MCF 10A (cell line): ENCODE measurements at regions of chr9 and their contacts with region 1.

Region 1: DNA sequence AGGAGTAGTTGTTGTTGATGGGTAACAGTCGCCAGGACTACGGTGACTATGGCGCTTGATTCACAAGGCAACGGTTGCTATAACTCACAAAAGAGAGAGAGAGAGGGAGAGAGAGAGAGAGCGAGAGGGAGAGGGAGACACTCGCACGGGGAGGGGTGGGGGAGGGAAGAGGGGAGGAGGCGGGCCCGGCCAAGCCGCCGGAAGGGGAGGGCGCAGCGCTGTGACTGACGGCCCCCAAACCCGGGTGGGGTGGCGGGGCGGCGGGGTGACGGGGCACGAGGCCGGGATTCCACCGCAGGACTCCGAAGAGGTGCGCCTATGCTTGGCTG is at the start of gene RFX3:
- DNase-seq: peak; percentile 96
- H3K4me3 Mint-ChIP-seq: peak within 1 kb of the TSS; percentile 94
- H3K27ac Mint-ChIP-seq: peak within 1 kb of the TSS; percentile 100
- H3K4me1 Mint-ChIP-seq: peaks cover 33% of the 10 kb centered on the region
- H3K27me3 Mint-ChIP-seq: no peaks in the 10 kb centered on the region
- CTCF ChIP-seq: no peak
- total RNA-seq, gene RFX3: 9.2 and 9.7 TPM in 2 replicates

Region 2: GRCh38 chr9:2837915-2838314 is 687.9 kb before region 1 on chr9:
- CTCF ChIA-PET with region 1: interaction called, 3 read pairs
- POLR2A ChIA-PET with region 1: interaction called, 22 read pairs
- intact Hi-C with region 1: no loop called
- DNase-seq: no peak
- H3K4me3 Mint-ChIP-seq: peak overlapping the region; percentile 63
- H3K27ac Mint-ChIP-seq: peak overlapping the region; percentile 84
- H3K4me1 Mint-ChIP-seq: peaks cover 24% of the 10 kb centered on the region
- H3K27me3 Mint-ChIP-seq: no peaks in the 10 kb centered on the region
- CTCF ChIP-seq: peak; percentile 35

Region 3: DNA sequence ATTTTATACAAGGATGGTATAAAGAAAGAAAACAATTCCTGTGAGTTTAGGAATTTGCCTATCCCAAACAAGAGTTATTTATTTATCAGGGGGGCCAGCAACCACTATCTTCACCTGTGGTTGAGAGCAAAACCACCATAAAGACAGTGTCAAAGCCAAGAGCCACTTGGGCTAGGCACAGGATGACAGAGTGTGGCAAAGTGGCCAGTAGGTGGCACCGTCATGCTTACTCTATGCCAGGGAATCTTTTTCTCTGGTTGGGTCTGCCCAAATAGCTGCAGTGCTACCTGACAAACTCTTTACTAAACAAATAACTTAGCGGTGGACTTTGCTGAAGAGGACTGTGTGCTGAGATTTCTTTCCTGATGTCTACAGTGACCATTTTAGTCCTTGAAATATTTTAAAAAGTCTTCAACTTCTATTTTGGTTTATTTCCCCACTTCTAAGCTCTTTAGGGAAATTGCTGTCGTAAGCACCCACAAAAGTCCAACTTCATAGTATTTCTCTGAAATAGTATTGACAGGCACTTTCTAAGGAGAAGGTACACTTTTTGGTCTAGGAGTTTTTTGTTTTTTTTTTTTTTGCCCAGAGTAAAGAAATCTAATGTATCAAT is 285.0 kb before region 1 on chr9:
- CTCF ChIA-PET with region 1: interaction called, 10 read pairs
- POLR2A ChIA-PET with region 1: interaction called, 5 read pairs
- intact Hi-C with region 1: loop called (anchors 5 kb)
- DNase-seq: peak; percentile 70
- H3K4me3 Mint-ChIP-seq: no peak overlapping the region
- H3K27ac Mint-ChIP-seq: no peak overlapping the region
- H3K4me1 Mint-ChIP-seq: peaks cover 9% of the 10 kb centered on the region
- H3K27me3 Mint-ChIP-seq: no peaks in the 10 kb centered on the region
- CTCF ChIP-seq: peak; percentile 67

Region 4: GRCh38 chr9:3478549-3478953 is 47.2 kb before region 1 on chr9:
- CTCF ChIA-PET with region 1: interaction called, 8 read pairs
- POLR2A ChIA-PET with region 1: interaction called, 86 read pairs
- intact Hi-C with region 1: no loop called
- DNase-seq: peak; percentile 84
- H3K4me3 Mint-ChIP-seq: peak overlapping the region; percentile 44
- H3K27ac Mint-ChIP-seq: peak overlapping the region; percentile 91
- H3K4me1 Mint-ChIP-seq: peaks cover 30% of the 10 kb centered on the region
- H3K27me3 Mint-ChIP-seq: no peaks in the 10 kb centered on the region
- CTCF ChIP-seq: no peak

Region 5: DNA sequence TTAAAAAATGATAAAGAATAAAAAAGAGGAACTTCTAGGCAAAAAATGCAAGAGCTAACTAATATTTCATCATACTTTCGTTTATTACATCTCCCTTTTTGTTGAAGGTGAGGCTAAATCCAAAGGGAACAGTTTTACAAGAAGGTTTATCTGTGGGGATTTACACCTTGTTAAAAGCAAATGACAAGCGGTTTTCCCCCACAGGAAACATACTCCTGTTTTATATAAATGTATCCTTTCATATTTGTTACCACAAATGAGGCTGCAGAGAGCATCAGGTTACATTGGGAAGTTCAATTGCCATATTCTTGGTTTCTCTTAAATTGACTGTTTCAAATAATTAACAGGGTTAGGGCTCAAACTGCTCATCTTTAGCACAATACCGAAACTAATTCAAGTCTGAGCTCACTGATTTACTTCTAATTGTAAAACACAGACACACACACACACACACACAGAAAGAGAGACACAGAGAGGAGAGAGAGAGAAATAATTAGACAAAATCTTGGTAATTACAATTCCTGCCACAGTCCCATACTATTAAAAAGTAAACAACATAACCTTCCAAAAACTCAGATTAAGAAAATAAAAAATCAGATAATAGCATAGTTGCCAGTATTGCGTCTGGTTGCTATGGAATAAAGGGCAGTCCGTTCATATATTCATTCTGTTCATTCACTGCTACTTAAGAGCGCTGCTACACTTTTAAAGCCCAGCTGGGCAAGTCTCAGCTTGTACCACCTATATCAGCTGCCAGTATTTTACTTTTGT is 17.1 kb before region 1 on chr9:
- CTCF ChIA-PET with region 1: interaction called, 5 read pairs
- POLR2A ChIA-PET with region 1: interaction called, 128 read pairs
- intact Hi-C with region 1: loop called (anchors 1 kb)
- DNase-seq: peak; percentile 70
- H3K4me3 Mint-ChIP-seq: peak overlapping the region; percentile 71
- H3K27ac Mint-ChIP-seq: peak overlapping the region; percentile 89
- H3K4me1 Mint-ChIP-seq: peaks cover 17% of the 10 kb centered on the region
- H3K27me3 Mint-ChIP-seq: no peaks in the 10 kb centered on the region
- CTCF ChIP-seq: no peak

Region 6: DNA sequence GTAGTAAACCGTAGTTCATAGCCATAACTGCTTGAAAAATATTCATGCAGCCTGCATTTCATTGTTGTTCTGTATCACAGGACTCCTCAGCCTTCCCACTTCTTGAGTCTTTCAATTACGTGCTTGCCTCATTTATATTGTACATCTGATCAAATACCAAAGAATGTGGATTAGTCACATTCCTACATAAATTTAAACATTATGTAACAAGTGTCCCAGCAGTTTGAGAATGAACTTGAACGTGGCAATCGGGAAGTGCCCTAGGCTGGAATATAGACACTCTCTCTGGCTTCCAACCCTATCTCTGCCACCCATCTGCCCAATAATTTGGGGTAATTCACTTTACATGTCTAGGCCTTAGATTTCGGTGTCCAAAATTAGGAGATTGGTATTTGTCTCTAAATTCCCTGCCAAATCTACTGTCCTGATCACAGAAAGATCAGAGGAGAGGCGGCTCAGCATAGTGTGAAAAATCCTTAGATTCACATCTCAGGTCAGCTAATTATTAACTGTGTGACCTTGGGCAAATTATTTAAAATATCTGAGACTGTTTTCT is 215.0 kb after region 1 on chr9:
- CTCF ChIA-PET with region 1: no interaction called
- POLR2A ChIA-PET with region 1: no interaction called
- intact Hi-C with region 1: no loop called
- DNase-seq: peak; percentile 48
- H3K4me3 Mint-ChIP-seq: no peak overlapping the region
- H3K27ac Mint-ChIP-seq: peak overlapping the region; percentile 63
- H3K4me1 Mint-ChIP-seq: peaks cover 9% of the 10 kb centered on the region
- H3K27me3 Mint-ChIP-seq: no peaks in the 10 kb centered on the region
- CTCF ChIP-seq: no peak

Region 7: DNA sequence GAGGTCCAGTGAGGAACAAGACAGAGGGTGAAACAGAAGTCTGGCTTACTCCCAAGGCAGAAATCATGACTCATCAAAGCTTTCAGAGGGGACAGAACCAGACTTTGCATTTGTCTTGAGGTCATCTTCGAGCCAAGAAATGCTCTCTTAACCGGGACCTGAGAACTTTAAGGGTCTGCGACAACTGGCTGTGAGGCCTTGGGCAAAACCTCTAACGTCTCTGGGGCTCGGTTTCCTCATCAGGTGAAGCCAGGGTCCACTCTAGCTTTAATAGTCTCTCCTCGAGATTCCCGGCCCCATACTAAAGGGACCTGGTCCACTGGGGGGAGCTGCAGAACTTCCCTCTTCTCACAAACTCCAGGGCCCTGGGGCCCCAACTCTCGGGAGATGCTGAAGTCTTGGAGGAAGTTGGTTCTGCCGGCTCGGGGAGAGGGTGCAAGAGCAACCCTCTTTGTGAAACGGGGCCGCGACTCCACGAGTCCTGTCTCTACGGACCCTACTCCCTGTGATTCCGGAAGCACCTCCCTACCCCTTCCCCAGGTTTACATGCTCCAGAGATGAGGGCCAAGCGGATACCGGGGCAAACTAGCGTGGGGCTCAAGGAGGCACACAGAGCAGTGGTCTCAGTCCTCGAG is 771.5 kb after region 1 on chr9:
- CTCF ChIA-PET with region 1: no interaction called
- POLR2A ChIA-PET with region 1: interaction called, 4 read pairs
- intact Hi-C with region 1: loop called (anchors 10 kb)
- DNase-seq: peak; percentile 91
- H3K4me3 Mint-ChIP-seq: peak overlapping the region; percentile 94
- H3K27ac Mint-ChIP-seq: peak overlapping the region; percentile 97
- H3K4me1 Mint-ChIP-seq: peaks cover 37% of the 10 kb centered on the region
- H3K27me3 Mint-ChIP-seq: no peaks in the 10 kb centered on the region
- CTCF ChIP-seq: peak; percentile 39